GM10248 (cell line): ENCODE measurements at regions of chr18 and their contacts with region 1.

Region 1: DNA sequence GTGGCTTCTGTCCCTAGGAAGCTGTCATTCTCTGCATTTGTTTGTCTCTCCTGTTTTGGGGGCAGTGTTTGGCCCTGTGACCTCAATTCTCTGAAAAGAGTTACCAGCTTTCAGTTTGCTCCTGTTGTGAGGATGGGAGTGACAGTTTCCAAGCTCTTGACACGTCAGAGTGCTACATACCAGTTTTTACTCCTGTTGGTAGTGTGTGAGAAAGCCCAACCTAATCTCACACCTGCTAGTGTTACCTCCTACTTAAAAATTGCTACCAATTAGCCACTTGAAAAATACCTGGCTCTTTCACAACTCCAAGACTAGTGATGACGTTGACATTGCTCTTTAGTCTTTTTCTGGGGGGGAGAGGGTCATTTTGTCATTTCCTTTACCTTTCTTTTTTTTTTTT is 14.1 kb downstream of the SKA1 start:
- DNase-seq: no peak
- CTCF ChIP-seq: no peak

Region 2: GRCh38 chr18:50307738-50308470 is 81.1 kb before region 1 on chr18:
- CTCF ChIA-PET with region 1: no interaction called
- POLR2A ChIA-PET with region 1: no interaction called
- DNase-seq: peak; percentile 93
- CTCF ChIP-seq: no peak

Region 3: GRCh38 chr18:50330176-50330575 is 58.8 kb before region 1 on chr18:
- CTCF ChIA-PET with region 1: no interaction called
- POLR2A ChIA-PET with region 1: no interaction called
- DNase-seq: no peak
- CTCF ChIP-seq: no peak

Region 4: GRCh38 chr18:50374753-50375391 is 14.1 kb before region 1 on chr18 and contains the start of gene SKA1:
- CTCF ChIA-PET with region 1: interaction called, 15 read pairs
- POLR2A ChIA-PET with region 1: no interaction called
- DNase-seq: peak; percentile 99
- CTCF ChIP-seq: no peak

Region 5: GRCh38 chr18:50441518-50441917 is 52.5 kb after region 1 on chr18:
- CTCF ChIA-PET with region 1: no interaction called
- POLR2A ChIA-PET with region 1: no interaction called
- DNase-seq: no peak
- CTCF ChIP-seq: no peak

Region 6: DNA sequence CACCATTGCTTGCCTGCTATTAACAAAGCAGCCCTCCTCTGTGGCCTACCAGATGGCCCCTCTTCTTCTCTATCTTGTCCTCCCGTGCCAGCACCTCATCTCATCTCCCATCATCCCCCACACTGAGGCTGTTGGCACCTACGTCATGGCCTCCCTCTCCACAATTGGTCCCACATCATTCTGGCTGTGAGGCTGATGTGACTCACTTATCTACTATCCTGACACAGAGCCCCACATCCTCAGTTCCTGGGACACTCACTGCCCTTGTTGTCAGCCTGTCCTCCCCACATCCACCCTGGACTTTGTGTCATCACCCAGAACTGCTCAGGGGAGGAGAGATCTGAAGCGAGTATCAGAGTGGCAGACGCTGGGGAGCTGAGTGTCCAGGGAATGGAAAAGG is 327.9 kb after region 1 on chr18:
- CTCF ChIA-PET with region 1: no interaction called
- POLR2A ChIA-PET with region 1: no interaction called
- DNase-seq: no peak
- CTCF ChIP-seq: no peak